Endothelial cell of umbilical vein (primary cell): ENCODE measurements at regions of chr6 and their contacts with region 1.

Region 1: DNA sequence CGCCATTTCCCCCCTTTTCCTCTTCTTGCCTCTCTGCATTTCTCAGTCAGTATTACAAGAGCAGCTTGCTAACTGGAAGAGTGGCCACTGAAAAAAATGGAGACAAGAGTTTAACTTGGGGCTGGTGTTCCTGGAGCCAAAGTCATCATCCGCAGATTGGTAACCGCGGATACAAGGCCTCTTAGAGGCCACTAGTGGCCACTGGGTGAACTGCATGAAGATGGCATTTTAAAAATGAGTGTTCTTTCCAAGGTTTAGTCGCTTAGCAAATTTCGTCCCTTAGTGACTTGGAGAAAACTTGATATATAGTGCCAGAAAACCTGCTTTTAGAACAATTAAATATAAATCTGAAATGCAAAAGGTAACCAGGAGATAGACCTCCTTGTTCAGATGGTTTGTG is 4.8 kb downstream of the F13A1 start:
- DNase-seq: peak; percentile 46
- H3K4me3 ChIP-seq: no peak overlapping the region
- H3K27ac ChIP-seq: no peak overlapping the region
- H3K4me1 ChIP-seq: peaks cover 4% of the 10 kb centered on the region
- H3K27me3 ChIP-seq: peaks cover 4 to 5% of the 10 kb centered on the region in 2 experiments
- CTCF ChIP-seq: peak; percentile 70 to 77
- POLR2A ChIP-seq: no peak

Region 2: DNA sequence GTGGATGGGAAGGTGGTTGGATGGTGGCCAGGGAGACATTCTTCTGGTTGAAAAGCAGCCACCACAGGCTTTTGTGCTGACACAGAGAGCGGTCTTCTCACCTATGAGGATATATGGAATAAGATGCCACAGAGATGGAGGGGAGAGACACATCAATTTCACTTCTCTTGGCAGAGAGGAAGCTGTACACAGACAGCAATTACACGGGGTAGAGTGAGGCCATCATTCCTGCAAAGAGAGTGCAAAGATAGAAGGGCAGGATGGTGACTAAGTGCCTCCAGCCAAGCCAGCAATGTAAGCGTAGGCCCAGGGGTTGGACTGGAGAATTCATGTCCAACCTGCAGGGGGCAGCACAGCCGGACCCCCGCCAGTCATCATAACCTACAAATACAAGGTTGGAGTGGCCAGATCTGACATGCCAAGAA is 365.3 kb before region 1 on chr6:
- CTCF ChIA-PET with region 1: no interaction called
- POLR2A ChIA-PET with region 1: no interaction called
- dilution Hi-C with region 1: no loop called
- intact Hi-C with region 1: loop called (anchors 1 kb)
- DNase-seq: peak; percentile 44
- H3K4me3 ChIP-seq: no peak overlapping the region
- H3K27ac ChIP-seq: no peak overlapping the region
- H3K4me1 ChIP-seq: no peaks in the 10 kb centered on the region
- H3K27me3 ChIP-seq: no peaks in the 10 kb centered on the region
- CTCF ChIP-seq: peak; percentile 52 to 63
- POLR2A ChIP-seq: no peak

Region 3: DNA sequence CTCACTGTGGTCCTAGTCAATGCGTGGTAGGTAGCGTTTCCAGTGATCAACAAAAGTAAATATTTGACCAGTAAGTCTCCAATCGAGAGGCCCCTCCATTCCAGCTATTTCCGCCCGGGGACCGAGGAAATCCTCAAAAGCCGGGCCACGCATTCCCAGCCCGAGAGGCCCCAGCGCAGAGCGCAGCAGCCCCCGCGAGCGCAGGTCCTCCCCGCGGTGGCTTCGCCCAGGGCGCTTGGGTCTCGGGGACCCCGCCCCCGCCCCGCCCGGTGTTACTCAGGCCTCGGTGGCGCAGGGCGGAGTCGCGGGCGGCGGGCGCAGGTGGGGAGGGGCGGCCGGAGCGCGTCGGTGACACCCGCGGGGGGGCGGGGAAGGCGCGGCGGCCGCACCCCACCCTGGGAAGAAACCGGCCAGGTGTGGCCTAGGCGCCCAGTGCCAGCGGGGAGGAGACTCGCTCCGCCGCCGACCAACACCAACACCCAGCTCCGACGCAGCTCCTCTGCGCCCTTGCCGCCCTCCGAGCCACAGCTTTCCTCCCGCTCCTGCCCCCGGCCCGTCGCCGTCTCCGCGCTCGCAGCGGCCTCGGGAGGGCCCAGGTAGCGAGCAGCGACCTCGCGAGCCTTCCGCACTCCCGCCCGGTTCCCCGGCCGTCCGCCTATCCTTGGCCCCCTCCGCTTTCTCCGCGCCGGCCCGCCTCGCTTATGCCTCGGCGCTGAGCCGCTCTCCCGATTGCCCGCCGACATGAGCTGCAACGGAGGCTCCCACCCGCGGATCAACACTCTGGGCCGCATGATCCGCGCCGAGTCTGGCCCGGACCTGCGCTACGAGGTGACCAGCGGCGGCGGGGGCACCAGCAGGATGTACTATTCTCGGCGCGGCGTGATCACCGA is 1225.8 kb after region 1 on chr6 and contains the start of gene DSP:
- CTCF ChIA-PET with region 1: no interaction called
- POLR2A ChIA-PET with region 1: no interaction called
- dilution Hi-C with region 1: no loop called
- intact Hi-C with region 1: no loop called
- DNase-seq: peak; percentile 15
- H3K4me3 ChIP-seq: peak within 1 kb of the TSS; percentile 34 to 47 (median 37)
- H3K27ac ChIP-seq: no peak within 1 kb of the TSS
- H3K4me1 ChIP-seq: peaks cover 10% of the 10 kb centered on the region
- H3K27me3 ChIP-seq: peaks cover 49 to 86% of the 10 kb centered on the region in 2 experiments
- CTCF ChIP-seq: no peak
- POLR2A ChIP-seq: no peak
- total RNA-seq, gene DSP: 0.32 and 0.77 TPM in 2 replicates